ENCODE measurements at regions of chr12 and their contacts with region 1.

Region 1: GRCh38 chr12:7959701-7960121 is 23.7 kb upstream of the SLC2A3 start:
- DNase-seq: peak; percentile 81 to 96
- H3K4me3 ChIP-seq: peak overlapping the region; percentile 63; the same call in 1 of the 2 replicates
- H3K27ac ChIP-seq: peak overlapping the region; percentile 75
- H3K4me1 ChIP-seq: peaks cover 35% of the 10 kb centered on the region
- H3K27me3 ChIP-seq: no peaks in the 10 kb centered on the region
- CTCF ChIP-seq: no peak

Region 2: DNA sequence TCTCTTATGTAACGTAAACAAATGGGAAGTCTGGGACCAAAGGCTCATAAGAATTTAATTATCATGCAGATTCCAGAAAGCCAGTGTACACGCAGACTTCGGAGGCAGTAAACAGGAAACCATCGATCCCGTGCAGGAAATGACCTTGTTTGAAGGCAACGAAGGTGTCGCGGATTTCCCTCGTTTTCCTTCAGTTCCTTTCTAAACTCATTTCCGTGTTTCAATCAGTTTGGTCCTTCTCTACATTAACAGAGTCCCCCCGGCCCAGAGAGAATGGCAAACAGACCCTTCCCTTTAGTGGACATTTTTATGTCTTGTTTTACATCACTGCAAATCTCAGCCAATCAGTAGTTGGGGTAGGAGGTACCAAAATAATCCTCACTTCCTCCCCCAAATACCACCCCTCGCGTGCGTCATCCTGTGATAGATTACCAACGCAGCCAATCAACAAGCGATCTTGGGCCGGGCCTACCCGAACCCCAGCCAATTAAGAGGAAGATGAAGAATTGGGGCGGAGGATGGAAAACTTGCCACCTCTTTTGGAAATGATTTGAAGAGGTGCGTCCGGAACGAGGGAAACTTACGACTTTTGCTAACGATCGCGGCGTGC is 66.7 kb after region 1 on chr12:
- CTCF ChIA-PET with region 1: no interaction called
- POLR2A ChIA-PET with region 1: no interaction called
- intact Hi-C with region 1: loop called (anchors 2 kb)
- DNase-seq: peak; percentile 98
- H3K4me3 ChIP-seq: peak overlapping the region; percentile 70
- H3K27ac ChIP-seq: peak overlapping the region; percentile 89
- H3K4me1 ChIP-seq: peaks cover 13% of the 10 kb centered on the region
- H3K27me3 ChIP-seq: no peaks in the 10 kb centered on the region
- CTCF ChIP-seq: no peak

Region 3: DNA sequence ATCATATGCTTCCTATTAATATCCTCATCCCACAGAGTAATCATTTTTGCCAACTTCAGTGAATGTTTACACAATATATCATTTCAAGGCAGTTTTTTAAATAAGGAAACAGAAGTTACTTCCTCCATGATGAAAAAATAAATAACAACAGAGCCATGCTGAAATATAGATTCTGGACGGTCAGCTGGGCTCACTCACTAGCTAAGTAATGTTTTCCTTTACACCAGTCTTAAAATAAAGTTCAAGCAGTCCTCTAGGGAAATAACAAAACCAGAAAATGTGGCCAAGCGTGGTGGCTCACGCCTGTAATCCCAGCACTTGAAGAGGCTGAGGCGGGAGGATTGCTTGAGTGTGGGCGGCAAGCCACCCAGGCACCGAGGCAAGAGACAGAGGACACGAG is 624.3 kb after region 1 on chr12:
- CTCF ChIA-PET with region 1: no interaction called
- POLR2A ChIA-PET with region 1: interaction called, 16 read pairs
- intact Hi-C with region 1: no loop called
- DNase-seq: no peak
- H3K4me3 ChIP-seq: no peak overlapping the region
- H3K27ac ChIP-seq: no peak overlapping the region
- H3K4me1 ChIP-seq: no peaks in the 10 kb centered on the region
- H3K27me3 ChIP-seq: peaks cover 7% of the 10 kb centered on the region; the same call in 1 of the 2 replicates
- CTCF ChIP-seq: no peak